Dendritic cell treated with granulocyte-macrophage colony-stimulating factor and Interleukin-4, amounts not matched to agents 40 ng/mL and 50 ng/mL, for 4 days (primary cell): ENCODE measurements at regions of chr10 and their contacts with region 1.

Region 1: DNA sequence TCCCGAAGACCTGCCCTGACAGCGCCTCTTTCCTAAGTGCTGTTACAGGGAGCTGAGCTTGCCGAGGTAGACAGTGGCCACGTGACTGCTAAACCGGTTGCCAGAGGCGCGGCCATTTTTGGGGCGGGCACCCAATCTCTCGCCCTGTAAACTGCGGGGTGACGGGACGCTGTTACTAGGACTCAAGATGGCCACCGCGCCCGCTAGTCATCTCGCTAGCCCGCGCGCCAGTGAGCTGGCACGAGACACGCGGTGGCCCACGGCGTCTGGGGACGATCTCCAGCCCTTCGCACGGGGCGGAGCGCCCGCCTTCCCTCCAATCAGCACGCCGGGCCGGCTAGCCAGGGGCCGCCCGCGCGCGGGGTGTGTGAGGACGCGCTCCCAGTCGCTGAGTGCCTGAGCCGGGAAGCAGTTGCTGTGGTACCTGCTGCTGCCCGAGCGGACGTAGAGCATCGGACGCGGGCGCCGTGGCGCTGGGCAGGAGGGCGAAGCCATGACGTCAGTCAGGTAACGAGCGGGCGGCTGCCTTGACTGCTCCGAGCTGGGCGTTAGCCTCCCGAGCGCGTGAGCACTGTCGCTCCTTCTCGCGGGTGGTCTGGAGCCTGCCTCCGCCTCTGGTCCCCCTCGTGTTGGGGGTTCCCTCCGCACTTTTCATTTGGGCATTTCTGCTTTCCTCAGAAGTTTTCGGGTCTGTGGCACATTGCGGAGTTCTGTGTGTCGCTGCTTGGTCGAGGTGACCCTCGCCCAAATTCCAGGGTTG is 25.5 kb downstream of the ADK start:
- H3K4me3 Mint-ChIP-seq: peak overlapping the region; percentile 95
- H3K27ac Mint-ChIP-seq: peak overlapping the region; percentile 97
- H3K4me1 Mint-ChIP-seq: peaks cover 30% of the 10 kb centered on the region
- H3K27me3 Mint-ChIP-seq: no peaks in the 10 kb centered on the region

Region 2: GRCh38 chr10:74151056-74151878 is 25.3 kb before region 1 on chr10 and contains the start of gene ADK:
- intact Hi-C with region 1: loop called (anchors 1 kb)
- H3K4me3 Mint-ChIP-seq: no peak within 1 kb of the TSS
- H3K27ac Mint-ChIP-seq: no peak within 1 kb of the TSS
- H3K4me1 Mint-ChIP-seq: peaks cover 36% of the 10 kb centered on the region
- H3K27me3 Mint-ChIP-seq: no peaks in the 10 kb centered on the region

Region 3: GRCh38 chr10:74165530-74165901 is 11.0 kb before region 1 on chr10:
- intact Hi-C with region 1: loop called (anchors 1 kb)
- H3K4me3 Mint-ChIP-seq: no peak overlapping the region
- H3K27ac Mint-ChIP-seq: peak overlapping the region; percentile 79
- H3K4me1 Mint-ChIP-seq: peaks cover 27% of the 10 kb centered on the region
- H3K27me3 Mint-ChIP-seq: no peaks in the 10 kb centered on the region